Sciatic nerve (tissue), 2 donors: ENCODE measurements at regions of chr1 and their contacts with region 1.

Region 1: GRCh38 chr1:57269630-57270225 is 154.1 kb downstream of the DAB1 start:
- DNase-seq: no peak
- ATAC-seq: no peak

Region 2: GRCh38 chr1:57741521-57741920 is 471.8 kb after region 1 on chr1:
- intact Hi-C with region 1: no loop called
- DNase-seq: no peak
- ATAC-seq: no peak

Region 3: GRCh38 chr1:58290685-58291372 is 1021.1 kb after region 1 on chr1:
- intact Hi-C with region 1: loop called (anchors 5 kb)
- DNase-seq: no peak
- ATAC-seq: no peak